Activated T-helper 1 cell treated with anti-CD3 and anti-CD28 coated beads, Interleukin-12 subunit alpha, Interleukin-12 subunit beta, Interleukin-2, Interleukin-4 antibody, amounts not matched to agents 30 ng/mL and 10 ng/mL and 1 ng/mL, durations not matched to agents 14 hours and 24 hours and 36 hours (primary cell): ENCODE measurements at regions of chr1 and their contacts with region 1.

Region 1: DNA sequence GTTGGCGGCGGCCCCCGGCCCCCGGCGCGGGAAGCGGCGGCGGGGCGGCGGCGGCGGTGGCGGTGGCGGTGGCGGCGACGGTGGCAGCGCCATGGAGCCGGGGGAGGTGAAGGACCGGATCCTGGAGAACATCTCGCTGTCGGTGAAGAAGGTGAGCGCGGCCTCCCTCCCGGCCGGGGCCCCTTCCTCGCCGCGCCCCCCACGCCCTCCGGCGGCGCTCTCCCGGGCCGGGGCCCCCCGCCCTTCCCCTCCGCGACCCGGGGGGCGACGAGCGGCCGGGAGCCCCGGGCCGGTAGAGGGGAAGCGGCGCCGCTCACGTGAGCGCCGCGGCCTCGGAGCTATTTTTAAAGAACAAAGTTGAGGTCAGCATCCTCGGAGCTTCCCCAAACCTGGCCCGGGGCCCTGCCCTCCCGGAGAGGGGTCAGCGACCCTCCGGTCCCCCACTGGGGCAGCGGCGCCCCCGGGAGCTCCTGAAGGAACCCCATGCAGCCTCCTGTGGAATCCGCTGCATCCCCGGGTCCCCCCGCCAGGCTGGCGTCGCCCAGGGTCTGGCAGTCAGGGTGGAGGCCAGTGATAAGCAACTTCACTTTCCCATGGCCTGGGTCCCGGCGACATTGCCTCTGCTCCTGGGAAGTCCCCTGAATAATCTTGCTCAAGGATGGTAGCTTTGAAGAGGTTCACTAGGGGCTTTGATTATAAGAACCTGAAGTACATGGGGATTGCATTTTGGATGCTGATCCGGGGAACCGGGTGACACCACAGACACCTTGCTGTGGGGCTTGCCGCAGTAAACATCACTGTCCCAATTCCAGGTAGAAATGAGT is 560 bp downstream of the PLEKHM2 start:
- DNase-seq: peak; percentile 18
- H3K4me3 Mint-ChIP-seq: peak overlapping the region; percentile 88
- H3K27ac Mint-ChIP-seq: peak overlapping the region; percentile 86
- H3K4me1 Mint-ChIP-seq: peaks cover 31% of the 10 kb centered on the region
- H3K27me3 Mint-ChIP-seq: peaks cover 2% of the 10 kb centered on the region

Region 2: DNA sequence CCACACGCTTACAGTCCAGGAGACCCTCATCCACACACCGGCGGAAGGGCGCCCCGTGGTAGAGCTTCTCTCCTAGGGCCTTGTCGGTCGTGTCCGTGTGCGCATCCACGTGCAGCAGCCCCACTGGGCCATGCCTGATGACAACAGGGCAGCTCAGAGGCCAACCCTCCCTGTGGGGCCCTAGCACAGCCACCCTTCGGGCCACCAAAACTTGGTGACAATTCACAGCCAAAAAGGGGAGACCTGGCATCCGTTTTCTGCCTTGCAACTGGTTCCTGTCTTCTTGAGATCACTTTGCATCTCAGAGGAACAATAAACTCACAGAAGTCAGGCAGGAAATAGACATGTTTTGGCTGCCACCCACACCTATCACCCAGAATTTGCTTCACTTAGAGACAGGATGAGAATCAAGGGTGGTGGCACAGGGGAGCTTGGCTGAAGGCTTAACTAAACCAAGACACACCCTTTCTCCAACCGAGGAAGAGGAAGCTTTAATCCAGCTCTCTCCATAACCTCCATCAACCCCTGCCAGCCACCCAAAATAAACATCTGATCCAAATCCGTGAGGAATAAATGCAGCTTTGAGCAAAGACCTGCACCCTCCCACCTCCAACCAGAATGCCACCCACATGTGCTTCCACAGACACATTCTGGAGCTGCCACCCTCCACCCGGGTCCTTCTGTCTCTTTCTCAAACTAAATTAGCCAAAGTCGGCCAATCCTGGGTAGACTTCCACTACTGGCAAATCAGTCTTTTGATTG is 105.6 kb before region 1 on chr1:
- intact Hi-C with region 1: loop called (anchors 1 kb)
- DNase-seq: peak; percentile 37
- H3K4me3 Mint-ChIP-seq: peak overlapping the region; percentile 75
- H3K27ac Mint-ChIP-seq: peak overlapping the region; percentile 90
- H3K4me1 Mint-ChIP-seq: peaks cover 48% of the 10 kb centered on the region
- H3K27me3 Mint-ChIP-seq: no peaks in the 10 kb centered on the region

Region 3: DNA sequence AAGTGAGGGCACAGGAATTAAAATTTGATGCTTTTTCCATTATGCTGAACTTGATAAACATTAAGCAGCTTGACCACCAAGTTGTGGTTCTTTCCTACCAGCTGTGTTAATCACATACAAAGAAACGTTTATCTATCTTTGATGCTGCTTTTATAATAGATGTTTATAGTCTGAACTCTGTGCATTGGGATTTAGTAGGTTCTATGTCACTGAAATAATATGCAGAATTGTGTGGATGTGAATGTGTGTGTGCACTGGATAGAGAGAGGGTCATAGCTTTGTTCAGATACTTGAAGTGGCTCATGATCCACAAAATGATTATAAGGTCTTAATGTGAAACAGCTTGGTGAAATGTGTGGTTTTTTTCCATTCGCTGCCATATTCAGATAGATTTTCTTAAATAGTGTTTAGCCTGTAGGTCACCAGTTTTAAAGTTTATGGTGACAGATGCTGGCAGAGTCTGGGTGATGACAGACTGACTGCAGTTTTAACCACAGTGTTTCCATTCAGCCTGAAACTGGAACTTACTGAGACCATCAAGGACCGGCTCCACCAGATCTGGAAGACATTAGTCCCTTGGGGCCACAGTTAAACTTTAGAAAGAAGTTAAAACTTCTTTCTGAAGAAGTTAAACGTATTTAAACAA is 57.2 kb before region 1 on chr1:
- intact Hi-C with region 1: no loop called
- DNase-seq: no peak
- H3K4me3 Mint-ChIP-seq: no peak overlapping the region
- H3K27ac Mint-ChIP-seq: peak overlapping the region; percentile 11
- H3K4me1 Mint-ChIP-seq: peaks cover 42% of the 10 kb centered on the region
- H3K27me3 Mint-ChIP-seq: no peaks in the 10 kb centered on the region

Region 4: GRCh38 chr1:15741183-15741850 is 56.6 kb after region 1 on chr1:
- intact Hi-C with region 1: no loop called
- DNase-seq: peak; percentile 65
- H3K4me3 Mint-ChIP-seq: no peak overlapping the region
- H3K27ac Mint-ChIP-seq: no peak overlapping the region
- H3K4me1 Mint-ChIP-seq: peaks cover 6% of the 10 kb centered on the region
- H3K27me3 Mint-ChIP-seq: no peaks in the 10 kb centered on the region